CD4-positive, alpha-beta memory T cell (primary cell): ENCODE measurements at regions of chr14 and their contacts with region 1.

Region 1: GRCh38 chr14:103391048-103391447 is 5.8 kb downstream of the MARK3 start:
- DNase-seq: peak; percentile 45 to 70 (median 50)
- H3K4me3 ChIP-seq: no peak overlapping the region
- H3K4me3 Mint-ChIP-seq: peak overlapping the region in 5 of 8 donors; percentile 26 to 76 (median 37)
- H3K27ac ChIP-seq: no peak overlapping the region
- H3K27ac Mint-ChIP-seq: peak overlapping the region; percentile 61 to 92 (median 75)
- H3K4me1 ChIP-seq: peaks cover 83% of the 10 kb centered on the region
- H3K4me1 Mint-ChIP-seq: peaks cover 43 to 79% (median 62%) of the 10 kb centered on the region in 4 donors
- H3K27me3 ChIP-seq: no peaks in the 10 kb centered on the region
- H3K27me3 Mint-ChIP-seq: no peaks in the 10 kb centered on the region

Region 2: GRCh38 chr14:103333754-103334643 is 57.0 kb before region 1 on chr14 and contains the start of gene EIF5:
- CTCF ChIA-PET with region 1: interaction called, 37 read pairs
- POLR2A ChIA-PET with region 1: interaction called, 27 read pairs
- intact Hi-C with region 1: no loop called
- DNase-seq: peak; percentile 99
- H3K4me3 ChIP-seq: peak within 1 kb of the TSS; percentile 82 to 94
- H3K4me3 Mint-ChIP-seq: peak within 1 kb of the TSS; percentile 93 to 99 (median 96)
- H3K27ac ChIP-seq: peak within 1 kb of the TSS; percentile 93
- H3K27ac Mint-ChIP-seq: peak within 1 kb of the TSS; percentile 96 to 99 (median 98)
- H3K4me1 ChIP-seq: peaks cover 39% of the 10 kb centered on the region
- H3K4me1 Mint-ChIP-seq: peaks cover 20 to 52% (median 36%) of the 10 kb centered on the region in 4 donors
- H3K27me3 ChIP-seq: no peaks in the 10 kb centered on the region
- H3K27me3 Mint-ChIP-seq: no peaks in the 10 kb centered on the region
- total RNA-seq, gene EIF5: 265 to 269 TPM

Region 3: DNA sequence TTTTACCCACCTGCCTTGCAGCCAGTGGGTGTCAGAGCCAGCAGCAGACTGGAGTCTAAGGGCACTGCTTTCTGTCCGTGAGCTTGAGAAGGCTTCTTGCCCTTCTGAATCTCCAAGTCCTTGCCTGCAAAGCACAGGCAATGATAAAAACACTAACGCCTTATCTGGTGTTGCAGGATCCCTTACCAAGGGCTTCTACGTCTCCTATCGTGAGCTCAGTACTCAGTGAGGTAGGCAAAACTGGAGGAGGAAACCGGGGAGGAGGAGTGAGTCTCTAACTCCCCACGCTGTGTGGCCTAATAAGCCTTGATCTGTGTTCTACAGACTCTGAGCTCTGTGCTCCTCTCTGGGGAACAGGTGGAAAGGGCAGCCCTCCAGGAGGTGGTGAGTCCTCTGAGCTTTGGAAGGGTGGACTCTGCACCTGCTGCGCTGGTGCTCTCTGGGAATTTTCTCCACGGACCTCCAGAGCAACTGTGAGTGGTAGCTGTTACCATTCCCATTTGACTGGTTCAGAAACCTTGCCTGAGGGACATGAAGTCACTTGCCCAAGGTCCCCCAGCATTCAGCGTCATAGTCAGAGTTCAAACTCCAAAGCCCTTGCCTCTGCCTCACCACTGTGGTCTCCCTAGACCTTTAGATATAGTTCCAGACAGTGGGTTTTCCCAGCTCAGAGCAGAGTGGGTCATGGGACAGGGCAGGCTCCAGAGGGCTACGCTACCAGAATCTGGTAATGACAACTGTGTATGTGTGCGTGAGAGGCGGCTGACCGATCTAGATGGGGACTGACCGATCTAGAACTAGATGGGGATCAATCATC is 12.8 kb before region 1 on chr14:
- CTCF ChIA-PET with region 1: interaction called, 24 read pairs
- POLR2A ChIA-PET with region 1: no interaction called
- intact Hi-C with region 1: no loop called
- DNase-seq: no peak
- H3K4me3 ChIP-seq: no peak overlapping the region
- H3K4me3 Mint-ChIP-seq: no peak overlapping the region
- H3K27ac ChIP-seq: no peak overlapping the region
- H3K27ac Mint-ChIP-seq: peak overlapping the region in 1 of 7 donors; percentile 38
- H3K4me1 ChIP-seq: no peaks in the 10 kb centered on the region
- H3K4me1 Mint-ChIP-seq: no peaks in the 10 kb centered on the region
- H3K27me3 ChIP-seq: no peaks in the 10 kb centered on the region
- H3K27me3 Mint-ChIP-seq: peaks cover 3 to 5% of the 10 kb centered on the region in 2 donors

Region 4: DNA sequence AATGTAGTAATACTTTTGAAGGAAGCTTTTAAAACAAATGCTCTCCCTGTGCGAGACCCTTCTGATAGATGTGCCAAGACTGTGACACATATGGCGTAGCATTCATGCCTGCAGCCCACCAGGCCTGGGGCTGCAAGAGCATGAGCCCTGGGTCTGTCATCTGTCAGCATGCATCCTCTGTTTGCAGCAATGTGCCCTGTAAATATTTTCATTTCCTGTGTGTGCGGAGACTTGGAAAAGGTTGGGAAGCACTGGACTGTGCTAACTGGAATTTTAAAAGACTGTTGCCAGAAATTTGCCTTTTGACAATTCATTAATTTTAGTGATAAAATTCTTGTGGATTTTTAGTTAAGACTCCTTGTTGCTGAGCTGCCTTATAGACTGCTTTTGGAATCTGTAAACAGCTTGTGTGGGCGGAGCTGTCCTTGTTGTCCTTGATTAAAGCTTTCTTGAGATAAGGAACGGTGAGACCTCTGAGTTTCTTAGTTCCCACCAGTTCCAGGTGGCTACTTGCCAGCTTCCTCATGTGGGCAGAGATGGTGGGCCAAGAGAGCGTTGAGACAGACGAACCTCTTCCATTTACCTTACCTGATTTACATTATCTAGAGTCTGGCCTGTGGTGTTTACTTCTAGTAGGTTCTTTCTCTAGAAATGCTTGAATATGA is 17.6 kb after region 1 on chr14:
- CTCF ChIA-PET with region 1: interaction called, 39 read pairs
- POLR2A ChIA-PET with region 1: no interaction called
- intact Hi-C with region 1: no loop called
- DNase-seq: no peak
- H3K4me3 ChIP-seq: no peak overlapping the region
- H3K4me3 Mint-ChIP-seq: no peak overlapping the region
- H3K27ac ChIP-seq: no peak overlapping the region
- H3K27ac Mint-ChIP-seq: peak overlapping the region in 5 of 7 donors; percentile 13 to 65 (median 39)
- H3K4me1 ChIP-seq: peaks cover 11% of the 10 kb centered on the region
- H3K4me1 Mint-ChIP-seq: peaks cover 19 to 35% (median 22%) of the 10 kb centered on the region in 4 donors
- H3K27me3 ChIP-seq: no peaks in the 10 kb centered on the region
- H3K27me3 Mint-ChIP-seq: no peaks in the 10 kb centered on the region

Region 5: GRCh38 chr14:103427485-103428443 is 36.7 kb after region 1 on chr14:
- CTCF ChIA-PET with region 1: interaction called, 13 read pairs
- POLR2A ChIA-PET with region 1: interaction called, 3 read pairs
- intact Hi-C with region 1: no loop called
- DNase-seq: peak; percentile 8 to 49 (median 22)
- H3K4me3 ChIP-seq: no peak overlapping the region
- H3K4me3 Mint-ChIP-seq: peak overlapping the region in 3 of 8 donors; percentile 13 to 50 (median 24)
- H3K27ac ChIP-seq: peak overlapping the region; percentile 2
- H3K27ac Mint-ChIP-seq: peak overlapping the region in 6 of 7 donors; percentile 36 to 66 (median 49)
- H3K4me1 ChIP-seq: peaks cover 33% of the 10 kb centered on the region
- H3K4me1 Mint-ChIP-seq: peaks cover 33 to 51% (median 38%) of the 10 kb centered on the region in 4 donors
- H3K27me3 ChIP-seq: no peaks in the 10 kb centered on the region
- H3K27me3 Mint-ChIP-seq: no peaks in the 10 kb centered on the region

Region 6: DNA sequence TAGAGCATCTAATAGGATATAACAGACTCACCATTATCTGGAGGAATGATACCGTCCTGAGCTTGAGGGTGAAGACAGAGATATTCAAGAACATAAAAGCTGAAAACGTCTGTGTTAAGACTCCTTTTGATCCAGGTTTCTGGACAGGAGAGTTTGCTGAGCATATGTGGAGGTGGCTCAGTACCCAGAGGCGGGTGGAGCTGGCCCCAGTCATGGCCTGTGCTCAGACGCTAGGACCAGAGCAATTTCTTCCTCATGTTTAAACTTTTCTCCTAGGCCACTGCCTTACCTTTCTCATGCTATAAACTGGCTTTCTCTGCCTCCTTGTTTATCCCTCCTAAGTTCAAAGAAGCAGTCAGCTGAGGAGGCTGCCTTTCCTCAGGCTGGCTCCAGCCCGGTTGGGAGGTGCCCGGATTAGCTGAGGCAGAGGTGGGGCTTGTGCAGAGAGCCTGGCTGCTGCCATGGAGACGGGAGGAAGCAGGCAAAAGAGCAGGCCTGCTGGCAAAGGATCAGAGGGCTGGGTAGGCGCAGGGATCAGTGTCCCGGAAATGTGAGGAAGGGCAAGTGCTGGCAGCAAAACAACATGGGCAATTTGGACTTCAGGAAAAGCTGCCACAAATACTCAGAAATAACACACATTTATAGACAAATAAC is 185.4 kb after region 1 on chr14:
- CTCF ChIA-PET with region 1: no interaction called
- POLR2A ChIA-PET with region 1: no interaction called
- intact Hi-C with region 1: no loop called
- DNase-seq: no peak
- H3K4me3 ChIP-seq: no peak overlapping the region
- H3K4me3 Mint-ChIP-seq: no peak overlapping the region
- H3K27ac ChIP-seq: no peak overlapping the region
- H3K27ac Mint-ChIP-seq: no peak overlapping the region
- H3K4me1 ChIP-seq: no peaks in the 10 kb centered on the region
- H3K4me1 Mint-ChIP-seq: peaks cover 0 to 2% (median 0%) of the 10 kb centered on the region in 4 donors
- H3K27me3 ChIP-seq: no peaks in the 10 kb centered on the region
- H3K27me3 Mint-ChIP-seq: no peaks in the 10 kb centered on the region